Transverse colon (tissue), 4 donors: ENCODE measurements at regions of chr9 and their contacts with region 1.

Region 1: GRCh38 chr9:73515216-73515615 is 363.6 kb downstream of the ANXA1 start:
- DNase-seq: no peak
- H3K4me3 ChIP-seq: no peak overlapping the region
- H3K27ac ChIP-seq: no peak overlapping the region
- H3K4me1 ChIP-seq: no peaks in the 10 kb centered on the region
- H3K27me3 ChIP-seq: no peaks in the 10 kb centered on the region
- CTCF ChIP-seq: no peak
- EP300 ChIP-seq: no peak
- POLR2A ChIP-seq: no peak

Region 2: GRCh38 chr9:73553295-73553694 is 38.1 kb after region 1 on chr9:
- in situ Hi-C with region 1: no loop called
- intact Hi-C with region 1: loop called (anchors 2 kb)
- DNase-seq: no peak
- H3K4me3 ChIP-seq: no peak overlapping the region
- H3K27ac ChIP-seq: no peak overlapping the region
- H3K4me1 ChIP-seq: no peaks in the 10 kb centered on the region
- H3K27me3 ChIP-seq: no peaks in the 10 kb centered on the region
- CTCF ChIP-seq: no peak
- EP300 ChIP-seq: no peak
- POLR2A ChIP-seq: no peak

Region 3: DNA sequence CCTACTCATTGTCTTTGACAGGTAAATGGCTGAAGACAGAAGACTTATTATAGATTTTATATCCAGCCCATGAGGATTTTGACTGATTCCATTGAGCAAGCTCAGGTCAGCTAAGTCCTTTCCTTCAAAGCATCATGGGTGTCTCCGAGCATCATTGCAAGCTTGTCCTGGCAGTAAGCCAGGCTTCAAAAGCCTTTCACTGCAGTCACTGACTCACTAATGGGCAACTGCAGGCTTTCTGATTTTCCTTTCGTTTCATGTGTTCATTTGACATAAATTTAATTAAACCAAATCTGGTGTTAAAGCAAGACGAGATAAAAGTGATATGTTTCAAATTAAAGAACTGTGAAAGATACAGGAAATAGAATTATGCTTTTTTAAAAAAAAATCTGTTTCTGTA is 62.6 kb after region 1 on chr9:
- in situ Hi-C with region 1: no loop called
- intact Hi-C with region 1: no loop called
- DNase-seq: no peak
- H3K4me3 ChIP-seq: no peak overlapping the region
- H3K27ac ChIP-seq: no peak overlapping the region
- H3K4me1 ChIP-seq: no peaks in the 10 kb centered on the region
- H3K27me3 ChIP-seq: no peaks in the 10 kb centered on the region
- CTCF ChIP-seq: no peak
- EP300 ChIP-seq: no peak
- POLR2A ChIP-seq: no peak